ENCODE measurements at regions of chr17 and their contacts with region 1.

Region 1: DNA sequence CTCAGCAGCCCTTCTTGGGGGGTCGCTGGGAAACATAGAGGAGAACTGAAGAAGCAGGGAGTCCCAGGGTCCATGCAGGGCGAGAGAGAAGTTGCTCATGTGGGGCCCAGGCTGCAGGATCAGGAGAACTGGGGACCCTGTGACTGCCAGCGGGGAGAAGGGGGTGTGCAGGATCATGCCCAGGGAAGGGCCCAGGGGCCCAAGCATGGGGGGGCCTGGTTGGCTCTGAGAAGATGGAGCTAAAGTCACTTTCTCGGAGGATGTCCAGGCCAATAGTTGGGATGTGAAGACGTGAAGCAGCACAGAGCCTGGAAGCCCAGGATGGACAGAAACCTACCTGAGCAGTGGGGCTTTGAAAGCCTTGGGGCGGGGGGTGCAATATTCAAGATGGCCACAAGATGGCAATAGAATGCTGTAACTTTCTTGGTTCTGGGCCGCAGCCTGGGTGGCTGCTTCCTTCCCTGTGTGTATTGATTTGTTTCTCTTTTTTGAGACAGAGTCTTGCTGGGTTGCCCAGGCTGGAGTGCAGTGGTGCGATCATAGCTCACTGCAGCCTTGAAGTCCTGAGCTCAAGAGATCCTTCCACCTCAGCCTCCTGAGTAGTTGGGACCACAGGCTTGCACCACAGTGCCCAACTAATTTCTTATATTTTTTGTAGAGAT is 3.4 kb downstream of the STH start:
- DNase-seq: peak; percentile 61
- ATAC-seq: peak; percentile 84

Region 2: GRCh38 chr17:46212634-46213435 is 210.4 kb after region 1 on chr17:
- intact Hi-C with region 1: loop called (anchors 10 kb)
- DNase-seq: no peak
- ATAC-seq: peak; percentile 81